Lower leg skin (tissue), 4 donors: ENCODE measurements at regions of chr1 and their contacts with region 1.

Region 1: GRCh38 chr1:210233216-210234020 is 822 bp downstream of the SERTAD4 start:
- DNase-seq: no peak
- H3K4me3 ChIP-seq: peak overlapping the region; percentile 48
- CTCF ChIP-seq: no peak
- POLR2A ChIP-seq: no peak

Region 2: DNA sequence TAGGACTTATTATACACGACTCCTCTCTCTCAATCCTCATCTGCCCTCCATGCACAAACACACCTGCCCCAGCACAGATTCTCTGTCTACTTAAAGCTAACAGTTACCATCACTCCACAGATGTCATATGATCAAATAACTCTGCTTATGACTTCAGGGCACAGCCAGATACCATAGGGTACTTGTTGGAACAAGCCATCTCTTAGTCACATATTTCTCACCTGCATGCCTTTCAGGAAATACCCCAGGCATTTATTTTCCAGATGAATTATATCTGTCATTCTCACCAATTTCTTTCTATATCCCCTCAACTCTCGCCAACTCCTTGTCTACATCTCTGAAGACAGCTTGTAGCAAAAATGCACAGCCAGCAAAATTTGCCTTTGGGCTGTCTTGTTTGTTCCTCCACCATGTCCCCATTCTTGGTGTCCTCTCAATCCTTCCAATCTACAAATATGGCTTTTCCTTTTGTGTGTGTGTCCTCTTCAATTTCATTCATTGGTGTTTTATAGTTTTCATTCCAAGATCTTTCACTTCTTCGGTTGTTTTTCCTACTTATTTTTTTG is 1003.8 kb before region 1 on chr1:
- intact Hi-C with region 1: no loop called
- DNase-seq: no peak
- H3K4me3 ChIP-seq: no peak overlapping the region
- CTCF ChIP-seq: no peak
- POLR2A ChIP-seq: no peak

Region 3: GRCh38 chr1:210250998-210251679 is 17.7 kb after region 1 on chr1:
- intact Hi-C with region 1: loop called (anchors 1 kb)
- DNase-seq: no peak
- H3K4me3 ChIP-seq: peak overlapping the region; percentile 22
- CTCF ChIP-seq: no peak
- POLR2A ChIP-seq: no peak